Activated CD8-positive, alpha-beta T cell treated with anti-CD3 and anti-CD28 coated beads, Interleukin-2, amount 10 ng/mL, durations not matched to agents 7 days and 5 days (primary cell): ENCODE measurements at regions of chr14 and their contacts with region 1.

Region 1: DNA sequence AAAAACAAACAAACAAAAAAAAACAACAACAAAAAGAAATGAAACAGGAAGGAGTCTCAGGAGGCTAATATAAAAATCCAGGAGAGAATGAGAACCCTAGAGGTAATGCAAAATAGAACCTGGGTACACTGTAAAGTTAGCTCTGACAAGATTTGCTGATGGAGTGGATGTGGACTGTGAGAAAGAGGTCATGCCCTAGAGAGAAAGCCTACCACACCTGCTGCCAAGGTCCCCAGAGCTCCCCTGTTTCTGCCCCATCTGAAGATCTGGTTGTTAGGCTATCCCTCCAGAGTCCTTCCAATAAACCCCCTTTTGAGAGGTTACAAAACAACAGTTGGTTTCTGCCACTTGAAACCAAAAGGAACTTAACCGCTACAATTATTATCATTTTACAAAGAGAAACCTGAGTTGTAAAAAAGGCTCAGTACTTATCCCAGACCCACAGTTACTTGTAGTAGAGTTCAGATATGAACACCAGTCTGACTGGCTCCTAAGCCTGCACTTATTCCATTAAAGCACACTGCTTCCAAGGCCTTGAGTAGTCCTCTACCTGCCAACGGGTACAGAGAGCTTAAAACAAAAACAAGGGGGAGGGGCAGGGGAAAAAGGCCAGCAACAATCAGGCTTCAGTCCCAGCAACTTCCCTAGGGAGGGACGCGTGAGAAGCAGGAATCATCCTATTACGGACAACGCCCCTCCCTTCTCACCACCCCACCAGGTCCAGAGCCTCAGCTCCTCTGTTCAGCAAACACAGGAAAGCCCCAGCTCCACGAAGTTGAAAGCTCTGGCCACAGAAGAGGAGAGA is 27.7 kb downstream of the PPP1R13B start:
- DNase-seq: no peak
- ATAC-seq: no peak
- H3K4me3 Mint-ChIP-seq: no peak overlapping the region
- H3K27ac Mint-ChIP-seq: no peak overlapping the region
- H3K4me1 Mint-ChIP-seq: peaks cover 13% of the 10 kb centered on the region
- H3K27me3 Mint-ChIP-seq: no peaks in the 10 kb centered on the region

Region 2: DNA sequence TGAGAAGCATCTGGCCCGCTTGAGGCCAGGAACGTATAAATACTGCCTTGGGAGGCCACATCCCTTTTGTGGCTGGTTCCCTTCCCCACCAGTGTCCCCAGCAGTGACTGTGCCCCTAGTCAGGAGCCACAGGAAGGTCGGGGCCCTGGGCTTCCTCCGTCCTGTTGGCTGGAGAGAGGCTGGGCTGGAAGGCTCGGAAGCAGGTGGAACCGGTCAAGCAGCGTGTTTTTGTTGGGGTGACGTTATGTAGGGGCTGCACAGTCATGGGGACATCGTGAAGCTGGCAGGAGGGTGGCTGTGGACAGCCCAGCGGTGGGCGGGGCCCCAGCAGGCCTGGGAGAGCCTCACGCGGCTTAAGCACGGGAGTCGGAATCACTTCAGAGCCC is 114.6 kb before region 1 on chr14:
- CTCF ChIA-PET with region 1: no interaction called
- POLR2A ChIA-PET with region 1: no interaction called
- DNase-seq: no peak
- ATAC-seq: no peak
- H3K4me3 Mint-ChIP-seq: no peak overlapping the region
- H3K27ac Mint-ChIP-seq: no peak overlapping the region
- H3K4me1 Mint-ChIP-seq: peaks cover 11% of the 10 kb centered on the region
- H3K27me3 Mint-ChIP-seq: no peaks in the 10 kb centered on the region

Region 3: DNA sequence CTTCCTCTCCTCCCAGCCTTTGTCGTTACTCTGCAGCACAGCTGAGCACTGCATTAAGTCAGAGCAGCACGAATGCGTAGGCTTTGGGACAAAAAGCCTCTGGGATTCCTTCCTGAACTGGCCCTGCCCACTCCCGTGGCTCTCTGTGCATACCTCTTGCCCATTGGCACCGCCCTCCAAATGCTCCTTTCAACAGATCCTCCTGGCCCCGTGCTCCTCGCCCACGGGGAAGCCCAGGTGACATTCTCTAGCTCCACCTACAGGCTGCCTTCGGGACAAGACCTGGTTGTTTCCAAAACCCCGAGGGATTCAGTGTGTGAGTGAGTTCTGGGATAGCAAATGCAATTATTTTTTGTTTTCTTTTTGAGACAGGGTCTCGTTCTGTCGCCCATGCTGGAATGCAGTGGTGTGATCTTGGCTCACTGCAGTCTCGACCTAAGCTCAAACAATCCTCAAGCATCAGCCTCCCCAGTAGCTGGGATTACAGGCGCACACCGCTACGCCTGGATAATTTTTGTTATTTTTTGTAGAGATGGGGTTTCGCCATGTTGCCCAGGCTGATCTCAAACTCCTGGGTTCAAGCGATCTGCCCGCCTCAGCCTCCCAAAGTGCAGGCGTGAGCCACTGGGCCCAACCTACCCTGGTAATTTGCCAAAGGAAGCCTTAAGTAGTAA is 90.7 kb after region 1 on chr14:
- CTCF ChIA-PET with region 1: interaction called, 15 read pairs
- POLR2A ChIA-PET with region 1: no interaction called
- DNase-seq: peak; percentile 80
- ATAC-seq: peak; percentile 95
- H3K4me3 Mint-ChIP-seq: peak overlapping the region; percentile 32
- H3K27ac Mint-ChIP-seq: peak overlapping the region; percentile 62
- H3K4me1 Mint-ChIP-seq: peaks cover 27% of the 10 kb centered on the region
- H3K27me3 Mint-ChIP-seq: no peaks in the 10 kb centered on the region